ENCODE measurements at regions of chr1 and their contacts with region 1.

Region 1: DNA sequence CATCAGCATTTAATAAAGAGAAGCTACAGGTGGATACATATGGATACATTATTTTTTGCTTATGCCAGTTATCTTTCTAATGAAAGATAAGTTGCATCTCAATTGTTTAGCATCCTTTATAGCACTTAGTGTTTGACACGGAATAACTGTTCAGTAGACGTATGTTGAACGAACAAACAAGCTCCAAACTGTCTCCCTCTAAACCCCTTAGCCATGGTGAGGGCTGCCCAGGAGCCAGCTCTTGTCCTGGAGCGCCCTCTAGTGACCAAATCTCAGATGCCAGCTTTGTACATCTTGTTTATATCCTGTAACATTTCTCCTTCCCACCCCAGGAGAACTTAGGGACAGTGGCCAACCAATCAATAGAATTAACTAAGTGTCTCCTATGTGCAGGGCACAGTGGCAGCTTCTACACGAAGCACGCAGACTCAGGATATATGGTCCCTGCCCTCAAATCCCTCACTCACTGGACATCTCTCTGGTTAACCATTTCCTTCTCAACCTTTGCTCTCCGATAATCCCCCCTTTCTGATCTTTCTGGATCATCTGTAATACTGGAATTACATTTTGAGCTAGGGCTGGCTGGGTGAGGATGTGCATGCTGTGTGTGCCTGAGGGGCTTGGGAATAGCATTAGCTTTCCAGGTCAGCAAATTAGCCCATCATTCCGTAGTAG is 22.9 kb downstream of the KCNA10 start:
- DNase-seq: peak; percentile 83
- H3K4me3 ChIP-seq: no peak overlapping the region
- H3K27ac ChIP-seq: no peak overlapping the region
- H3K4me1 ChIP-seq: peaks cover 10% of the 10 kb centered on the region
- H3K27me3 ChIP-seq: no peaks in the 10 kb centered on the region
- CTCF ChIP-seq: peak; percentile 94

Region 2: GRCh38 chr1:110087812-110088738 is 408.0 kb before region 1 on chr1:
- CTCF ChIA-PET with region 1: interaction called, 13 read pairs
- POLR2A ChIA-PET with region 1: no interaction called
- intact Hi-C with region 1: no loop called
- DNase-seq: peak; percentile 74
- H3K4me3 ChIP-seq: no peak overlapping the region
- H3K27ac ChIP-seq: no peak overlapping the region
- H3K4me1 ChIP-seq: peaks cover 13% of the 10 kb centered on the region
- H3K27me3 ChIP-seq: peaks cover 71% of the 10 kb centered on the region
- CTCF ChIP-seq: peak; percentile 70

Region 3: GRCh38 chr1:110203021-110203661 is 292.9 kb before region 1 on chr1:
- CTCF ChIA-PET with region 1: interaction called, 34 read pairs
- POLR2A ChIA-PET with region 1: no interaction called
- intact Hi-C with region 1: loop called (anchors 1 kb)
- DNase-seq: peak; percentile 79
- H3K4me3 ChIP-seq: no peak overlapping the region
- H3K27ac ChIP-seq: no peak overlapping the region
- H3K4me1 ChIP-seq: peaks cover 7% of the 10 kb centered on the region
- H3K27me3 ChIP-seq: no peaks in the 10 kb centered on the region
- CTCF ChIP-seq: peak; percentile 86

Region 4: GRCh38 chr1:110312188-110313121 is 183.6 kb before region 1 on chr1:
- CTCF ChIA-PET with region 1: no interaction called
- POLR2A ChIA-PET with region 1: no interaction called
- intact Hi-C with region 1: loop called (anchors 10 kb)
- DNase-seq: peak; percentile 75
- H3K4me3 ChIP-seq: no peak overlapping the region
- H3K27ac ChIP-seq: no peak overlapping the region
- H3K4me1 ChIP-seq: no peaks in the 10 kb centered on the region
- H3K27me3 ChIP-seq: no peaks in the 10 kb centered on the region
- CTCF ChIP-seq: peak; percentile 89

Region 5: DNA sequence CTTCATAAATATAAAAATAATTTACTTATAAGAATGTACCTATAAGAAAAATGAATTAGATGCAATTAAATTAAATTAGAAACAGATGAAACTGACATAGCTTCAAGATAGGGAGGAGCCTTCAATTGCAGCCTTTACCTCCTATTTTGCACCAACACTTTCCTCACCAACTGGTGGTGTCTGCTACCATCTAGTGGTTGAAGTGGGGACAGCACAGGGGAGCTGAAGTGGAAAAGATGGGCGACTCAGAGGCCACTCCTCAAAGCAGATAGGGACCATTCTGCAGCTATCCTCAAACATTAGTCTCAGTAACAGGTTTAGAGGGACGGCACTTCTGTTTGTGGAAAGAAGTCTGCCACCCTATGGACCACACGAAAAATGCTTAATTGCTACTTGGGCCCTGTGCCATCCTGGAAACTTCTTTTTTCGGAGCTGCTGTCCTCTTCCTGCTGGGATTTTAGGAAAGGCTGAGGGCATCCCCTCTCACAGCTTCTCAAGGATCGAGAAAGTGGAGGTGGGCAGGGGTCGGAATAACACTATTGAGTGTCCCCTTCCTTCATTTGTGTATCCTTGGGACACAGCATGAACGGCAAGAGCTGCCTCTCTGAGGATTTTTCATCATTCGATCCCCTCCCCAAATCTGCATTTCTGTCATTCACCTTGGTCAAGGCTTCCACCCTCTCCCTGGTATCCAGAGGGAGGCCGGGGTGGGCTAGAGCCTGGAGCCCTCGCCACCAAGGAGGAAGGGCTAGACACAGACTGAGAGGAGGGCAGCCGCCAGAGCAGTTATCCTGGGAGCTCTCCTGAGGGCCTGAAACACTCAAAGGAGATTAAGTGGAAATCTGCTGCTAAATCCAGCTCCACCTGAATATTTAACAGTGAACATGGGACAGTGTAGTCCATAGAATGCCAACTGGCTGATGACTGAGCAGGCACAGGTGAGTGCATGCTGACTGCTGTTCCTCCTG is 35.5 kb before region 1 on chr1:
- CTCF ChIA-PET with region 1: interaction called, 28 read pairs
- POLR2A ChIA-PET with region 1: no interaction called
- intact Hi-C with region 1: loop called (anchors 5 kb)
- DNase-seq: peak; percentile 90
- H3K4me3 ChIP-seq: no peak overlapping the region
- H3K27ac ChIP-seq: no peak overlapping the region
- H3K4me1 ChIP-seq: no peaks in the 10 kb centered on the region
- H3K27me3 ChIP-seq: no peaks in the 10 kb centered on the region
- CTCF ChIP-seq: peak; percentile 98

Measured in A673 (cell line).